PC-9 (cell line): ENCODE measurements at regions of chr20 and their contacts with region 1.

Region 1: GRCh38 chr20:53750827-53751619 is 157.4 kb upstream of the ZNF217 start:
- DNase-seq: no peak
- H3K4me3 ChIP-seq: no peak overlapping the region
- H3K27ac ChIP-seq: peak overlapping the region; percentile 98
- H3K4me1 ChIP-seq: peaks cover 83% of the 10 kb centered on the region
- H3K27me3 ChIP-seq: no peaks in the 10 kb centered on the region
- CTCF ChIP-seq: no peak

Region 2: DNA sequence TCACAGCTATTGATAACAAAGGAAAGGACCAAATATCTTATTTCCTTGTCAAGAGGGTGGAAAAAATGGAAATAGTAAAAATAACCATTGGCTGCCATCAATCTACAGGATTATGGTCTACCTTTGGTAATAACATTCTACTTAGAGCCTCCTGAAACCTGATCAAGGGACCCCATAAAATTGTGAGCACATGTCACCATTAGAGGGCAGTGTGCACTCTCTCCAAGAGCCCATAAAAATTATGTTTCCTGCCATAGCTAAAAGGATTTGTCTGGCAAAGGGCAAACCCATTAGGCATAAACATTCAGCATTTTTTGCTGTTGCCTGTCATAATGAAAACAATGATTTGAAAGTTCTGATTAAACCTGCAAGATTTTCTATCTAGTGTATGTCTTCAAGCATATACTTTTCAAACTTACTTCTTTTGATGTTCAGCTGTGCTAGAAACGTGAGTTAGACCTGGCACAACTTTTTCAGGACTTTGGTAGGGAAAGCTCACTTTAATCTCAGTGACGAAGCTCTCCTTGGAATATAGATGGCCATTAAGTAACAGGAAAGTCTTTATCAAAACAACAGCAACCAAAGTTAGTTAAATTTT is 1438.8 kb before region 1 on chr20:
- CTCF ChIA-PET with region 1: no interaction called
- POLR2A ChIA-PET with region 1: interaction called, 12 read pairs
- intact Hi-C with region 1: no loop called
- DNase-seq: peak; percentile 35 to 51
- H3K4me3 ChIP-seq: no peak overlapping the region
- H3K27ac ChIP-seq: no peak overlapping the region
- H3K4me1 ChIP-seq: no peaks in the 10 kb centered on the region
- H3K27me3 ChIP-seq: peaks cover 71% of the 10 kb centered on the region
- CTCF ChIP-seq: peak; percentile 87

Region 3: DNA sequence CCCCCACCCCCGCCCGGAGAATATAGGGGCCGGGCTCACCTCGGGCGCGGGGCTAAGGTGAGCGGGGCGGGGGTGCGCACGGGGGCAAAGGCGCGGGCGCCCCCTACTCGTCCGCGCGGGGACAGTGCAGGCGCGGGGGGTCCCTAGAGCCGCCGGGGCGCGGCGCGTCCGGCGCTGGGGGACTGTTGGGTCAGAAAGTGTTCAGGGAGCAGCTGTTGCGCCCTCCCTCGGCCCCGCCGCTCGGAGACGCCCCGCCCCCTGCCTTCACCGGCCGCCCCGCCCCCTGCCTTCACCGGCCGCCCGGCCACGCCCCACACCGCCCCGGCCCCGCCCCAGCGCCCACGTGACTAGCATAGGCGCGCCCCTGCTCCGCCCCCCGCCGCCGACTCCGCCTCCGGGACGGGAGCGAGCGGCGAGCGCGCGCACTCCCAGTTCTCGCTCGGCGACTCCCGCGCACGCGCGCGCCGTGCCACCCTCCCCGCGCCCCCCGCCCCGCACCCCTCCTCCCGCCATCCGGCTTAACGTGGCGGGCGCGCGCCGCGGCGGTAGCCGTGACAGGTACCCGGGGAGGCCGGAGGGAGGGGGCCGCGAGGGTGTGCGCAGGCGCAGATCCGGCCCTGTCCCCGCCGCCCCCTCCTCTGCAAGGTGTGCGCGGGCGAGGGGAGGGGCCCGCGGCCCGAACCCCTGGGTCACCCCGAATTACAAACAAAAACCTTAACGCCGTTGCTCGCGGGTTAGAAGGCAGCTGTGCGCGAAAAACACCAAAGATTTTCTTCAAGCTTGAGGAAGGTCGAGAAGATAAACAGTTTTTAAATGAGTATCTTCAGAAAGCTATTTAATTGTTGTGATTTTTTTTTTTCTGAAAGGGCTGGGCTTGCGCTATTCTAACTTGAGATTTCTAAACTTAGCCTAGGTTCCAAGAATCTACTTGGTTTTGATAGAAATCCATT is 156.7 kb before region 1 on chr20:
- CTCF ChIA-PET with region 1: no interaction called
- POLR2A ChIA-PET with region 1: interaction called, 6 read pairs
- intact Hi-C with region 1: loop called (anchors 1 kb)
- DNase-seq: peak; percentile 73 to 98
- H3K4me3 ChIP-seq: peak overlapping the region; percentile 99
- H3K27ac ChIP-seq: peak overlapping the region; percentile 98
- H3K4me1 ChIP-seq: peaks cover 59% of the 10 kb centered on the region
- H3K27me3 ChIP-seq: no peaks in the 10 kb centered on the region
- CTCF ChIP-seq: no peak; the same call in 1 of the 2 replicates

Region 4: DNA sequence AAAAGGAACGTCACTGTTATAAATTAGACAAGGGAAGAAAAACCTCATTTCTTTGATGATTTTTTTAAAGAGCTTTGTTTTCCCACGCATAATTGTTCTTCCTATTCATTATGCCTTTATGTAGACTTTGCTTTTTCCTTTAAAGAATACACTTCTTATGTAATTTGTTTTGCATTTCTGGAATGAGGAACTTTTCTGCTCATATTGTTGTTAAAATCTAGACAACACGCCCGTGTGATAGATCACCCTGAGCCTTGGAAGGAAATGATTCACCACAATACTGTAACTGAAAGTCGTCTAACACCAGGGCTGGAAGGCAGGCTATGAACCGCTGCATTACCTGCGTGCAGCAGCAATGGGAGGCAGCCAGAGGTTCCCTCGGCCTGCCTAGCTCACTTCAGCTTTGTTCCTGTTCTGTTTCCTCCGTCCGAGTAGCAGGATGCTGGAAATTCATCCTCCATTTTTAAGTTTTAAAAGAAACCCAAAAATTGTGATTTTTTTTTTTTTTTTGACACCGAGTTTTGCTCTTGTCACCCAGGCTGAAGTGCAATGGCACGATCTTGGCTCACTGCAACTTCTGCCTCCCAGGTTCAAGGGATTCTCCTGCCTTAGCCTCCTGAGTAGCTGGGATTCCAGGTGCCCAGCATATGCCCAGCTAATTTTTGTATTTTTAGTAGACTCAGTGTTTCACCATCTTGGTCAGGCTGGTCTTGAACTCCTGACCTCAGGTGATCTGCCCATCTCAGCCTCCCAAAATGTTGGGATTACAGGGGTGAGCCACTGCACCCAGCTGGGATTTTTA is 107.8 kb before region 1 on chr20:
- CTCF ChIA-PET with region 1: no interaction called
- POLR2A ChIA-PET with region 1: interaction called, 4 read pairs
- intact Hi-C with region 1: loop called (anchors 2 kb)
- DNase-seq: peak; percentile 73 to 98
- H3K4me3 ChIP-seq: peak overlapping the region; percentile 26
- H3K27ac ChIP-seq: peak overlapping the region; percentile 94
- H3K4me1 ChIP-seq: peaks cover 39% of the 10 kb centered on the region
- H3K27me3 ChIP-seq: no peaks in the 10 kb centered on the region
- CTCF ChIP-seq: no peak; the same call in 1 of the 2 replicates

Region 5: GRCh38 chr20:53786445-53787267 is 35.6 kb after region 1 on chr20:
- CTCF ChIA-PET with region 1: interaction called, 6 read pairs
- POLR2A ChIA-PET with region 1: no interaction called
- intact Hi-C with region 1: loop called (anchors 1 kb)
- DNase-seq: peak; percentile 44 to 97
- H3K4me3 ChIP-seq: peak overlapping the region; percentile 40; the same call in 1 of the 2 replicates
- H3K27ac ChIP-seq: peak overlapping the region; percentile 98
- H3K4me1 ChIP-seq: peaks cover 68% of the 10 kb centered on the region
- H3K27me3 ChIP-seq: no peaks in the 10 kb centered on the region
- CTCF ChIP-seq: no peak; the same call in 1 of the 2 replicates

Region 6: GRCh38 chr20:53915446-53916172 is 164.6 kb after region 1 on chr20:
- CTCF ChIA-PET with region 1: no interaction called
- POLR2A ChIA-PET with region 1: interaction called, 11 read pairs
- intact Hi-C with region 1: loop called (anchors 1 kb)
- DNase-seq: peak; percentile 95 to 98
- H3K4me3 ChIP-seq: peak overlapping the region; percentile 61
- H3K27ac ChIP-seq: peak overlapping the region; percentile 93
- H3K4me1 ChIP-seq: peaks cover 47% of the 10 kb centered on the region
- H3K27me3 ChIP-seq: no peaks in the 10 kb centered on the region
- CTCF ChIP-seq: peak; percentile 97